Naive thymus-derived CD4-positive, alpha-beta T cell (primary cell): ENCODE measurements at regions of chr1 and their contacts with region 1.

Region 1: GRCh38 chr1:184754476-184755225 is at the start of gene EDEM3:
- DNase-seq: peak; percentile 86 to 100 (median 99)
- ATAC-seq: peak; percentile 96
- H3K4me3 ChIP-seq: peak within 1 kb of the TSS; percentile 84
- H3K4me3 Mint-ChIP-seq: peak within 1 kb of the TSS; percentile 87 to 96 (median 94)
- H3K27ac ChIP-seq: peak within 1 kb of the TSS; percentile 91
- H3K27ac Mint-ChIP-seq: peak within 1 kb of the TSS; percentile 71 to 97 (median 93)
- H3K4me1 ChIP-seq: peaks cover 9 to 13% of the 10 kb centered on the region in 2 donors
- H3K4me1 Mint-ChIP-seq: peaks cover 21 to 50% (median 46%) of the 10 kb centered on the region in 7 donors
- H3K27me3 ChIP-seq: no peaks in the 10 kb centered on the region
- H3K27me3 Mint-ChIP-seq: peaks cover 0 to 13% (median 0%) of the 10 kb centered on the region in 5 donors
- total RNA-seq, gene EDEM3: 21.0 to 55.9 (median 33.9) TPM

Region 2: GRCh38 chr1:182839209-182840065 is 1915.2 kb before region 1 on chr1 and contains the start of gene DHX9:
- CTCF ChIA-PET with region 1: no interaction called
- POLR2A ChIA-PET with region 1: no interaction called
- intact Hi-C with region 1: loop called in 1 of 2 experiments (anchors 1 kb)
- DNase-seq: peak; percentile 93 to 100 (median 97)
- ATAC-seq: peak; percentile 89
- H3K4me3 ChIP-seq: peak within 1 kb of the TSS; percentile 99
- H3K4me3 Mint-ChIP-seq: peak within 1 kb of the TSS; percentile 91 to 100 (median 98)
- H3K27ac ChIP-seq: peak within 1 kb of the TSS; percentile 84
- H3K27ac Mint-ChIP-seq: peak within 1 kb of the TSS; percentile 92 to 100 (median 98)
- H3K4me1 ChIP-seq: peaks cover 22 to 33% of the 10 kb centered on the region in 2 donors
- H3K4me1 Mint-ChIP-seq: peaks cover 36 to 61% (median 54%) of the 10 kb centered on the region in 7 donors
- H3K27me3 ChIP-seq: no peaks in the 10 kb centered on the region
- H3K27me3 Mint-ChIP-seq: peaks cover 0 to 9% (median 0%) of the 10 kb centered on the region in 5 donors
- total RNA-seq, gene DHX9: 207 to 299 (median 227) TPM

Region 3: DNA sequence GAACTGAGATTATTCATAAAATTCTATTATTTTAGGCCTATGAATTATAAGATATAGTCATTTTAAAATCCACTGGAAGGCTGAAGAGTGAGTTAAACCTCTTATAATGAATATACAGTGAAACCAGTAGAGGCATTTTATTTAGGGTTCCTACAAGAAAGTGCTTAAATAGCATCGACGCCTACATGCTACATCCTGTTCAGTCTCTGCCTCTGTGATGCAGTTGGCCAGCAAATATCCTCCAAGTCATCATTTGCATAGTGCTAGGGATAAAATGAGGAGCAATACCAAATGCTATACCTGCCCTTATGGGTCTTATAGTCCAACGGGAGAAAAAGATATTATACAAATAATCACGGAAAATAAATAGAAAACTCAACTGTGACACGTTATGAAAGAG is 59.6 kb before region 1 on chr1:
- CTCF ChIA-PET with region 1: no interaction called
- POLR2A ChIA-PET with region 1: no interaction called
- intact Hi-C with region 1: no loop called
- DNase-seq: no peak
- ATAC-seq: no peak
- H3K4me3 ChIP-seq: no peak overlapping the region
- H3K4me3 Mint-ChIP-seq: no peak overlapping the region
- H3K27ac ChIP-seq: no peak overlapping the region
- H3K27ac Mint-ChIP-seq: peak overlapping the region in 2 of 9 donors; percentile 8 to 63
- H3K4me1 ChIP-seq: no peaks in the 10 kb centered on the region
- H3K4me1 Mint-ChIP-seq: peaks cover 4 to 15% (median 8%) of the 10 kb centered on the region in 7 donors
- H3K27me3 ChIP-seq: no peaks in the 10 kb centered on the region
- H3K27me3 Mint-ChIP-seq: no peaks in the 10 kb centered on the region

Region 4: DNA sequence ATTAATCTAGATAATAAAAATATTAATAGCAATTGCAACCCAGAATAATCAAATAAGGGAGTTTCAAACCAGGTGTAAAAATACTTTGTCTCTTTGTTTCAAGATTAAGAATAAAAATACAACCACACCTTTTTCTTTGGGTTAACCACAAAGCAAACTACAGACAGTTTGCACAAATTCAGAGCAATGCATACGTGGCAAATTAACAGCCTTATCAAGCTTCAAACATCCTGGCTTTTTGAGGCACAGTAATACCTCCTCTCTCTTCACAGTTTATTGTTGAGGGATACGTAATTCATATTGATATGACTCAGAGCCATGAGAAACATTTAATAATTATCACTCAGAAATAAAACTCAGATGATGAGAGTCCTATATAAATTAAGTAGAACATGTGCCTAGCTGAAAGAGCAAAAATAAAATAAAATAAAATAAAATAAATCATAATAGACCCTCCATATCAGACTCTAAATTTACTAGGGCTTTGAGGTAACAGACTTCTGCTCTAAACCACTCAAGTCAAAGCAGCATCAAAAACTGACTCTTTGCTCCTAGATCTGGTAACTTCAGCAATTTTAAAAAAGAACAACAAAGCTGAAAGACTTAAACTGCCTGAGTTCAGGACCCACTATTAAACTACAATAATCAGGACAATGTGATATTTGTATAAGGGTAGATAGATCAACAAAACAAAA is 11.4 kb before region 1 on chr1:
- CTCF ChIA-PET with region 1: interaction called, 3 read pairs
- POLR2A ChIA-PET with region 1: interaction called, 19 read pairs
- intact Hi-C with region 1: loop called (anchors 1 kb)
- DNase-seq: peak in 7 of 9 donors; percentile 68 to 85 (median 79)
- ATAC-seq: peak; percentile 95
- H3K4me3 ChIP-seq: no peak overlapping the region
- H3K4me3 Mint-ChIP-seq: peak overlapping the region; percentile 48 to 86 (median 74)
- H3K27ac ChIP-seq: peak overlapping the region; percentile 55
- H3K27ac Mint-ChIP-seq: peak overlapping the region; percentile 82 to 99 (median 93)
- H3K4me1 ChIP-seq: peaks cover 33 to 37% of the 10 kb centered on the region in 2 donors
- H3K4me1 Mint-ChIP-seq: peaks cover 34 to 82% (median 70%) of the 10 kb centered on the region in 7 donors
- H3K27me3 ChIP-seq: no peaks in the 10 kb centered on the region
- H3K27me3 Mint-ChIP-seq: no peaks in the 10 kb centered on the region

Region 5: GRCh38 chr1:184790642-184791549 is 36.2 kb after region 1 on chr1:
- CTCF ChIA-PET with region 1: no interaction called
- POLR2A ChIA-PET with region 1: no interaction called
- intact Hi-C with region 1: no loop called
- DNase-seq: no peak
- ATAC-seq: no peak
- H3K4me3 ChIP-seq: no peak overlapping the region
- H3K4me3 Mint-ChIP-seq: no peak overlapping the region
- H3K27ac ChIP-seq: no peak overlapping the region
- H3K27ac Mint-ChIP-seq: no peak overlapping the region
- H3K4me1 ChIP-seq: no peaks in the 10 kb centered on the region
- H3K4me1 Mint-ChIP-seq: peaks cover 0 to 12% (median 7%) of the 10 kb centered on the region in 7 donors
- H3K27me3 ChIP-seq: no peaks in the 10 kb centered on the region
- H3K27me3 Mint-ChIP-seq: no peaks in the 10 kb centered on the region

Region 6: GRCh38 chr1:184910691-184911091 is 156.0 kb after region 1 on chr1:
- CTCF ChIA-PET with region 1: no interaction called
- POLR2A ChIA-PET with region 1: no interaction called
- intact Hi-C with region 1: no loop called
- DNase-seq: no peak
- ATAC-seq: no peak
- H3K4me3 ChIP-seq: no peak overlapping the region
- H3K4me3 Mint-ChIP-seq: no peak overlapping the region
- H3K27ac ChIP-seq: no peak overlapping the region
- H3K27ac Mint-ChIP-seq: no peak overlapping the region
- H3K4me1 ChIP-seq: peaks cover 0 to under 1% of the 10 kb centered on the region in 2 donors
- H3K4me1 Mint-ChIP-seq: no peaks in the 10 kb centered on the region
- H3K27me3 ChIP-seq: no peaks in the 10 kb centered on the region
- H3K27me3 Mint-ChIP-seq: peaks cover 0 to 7% (median 0%) of the 10 kb centered on the region in 5 donors

Region 7: DNA sequence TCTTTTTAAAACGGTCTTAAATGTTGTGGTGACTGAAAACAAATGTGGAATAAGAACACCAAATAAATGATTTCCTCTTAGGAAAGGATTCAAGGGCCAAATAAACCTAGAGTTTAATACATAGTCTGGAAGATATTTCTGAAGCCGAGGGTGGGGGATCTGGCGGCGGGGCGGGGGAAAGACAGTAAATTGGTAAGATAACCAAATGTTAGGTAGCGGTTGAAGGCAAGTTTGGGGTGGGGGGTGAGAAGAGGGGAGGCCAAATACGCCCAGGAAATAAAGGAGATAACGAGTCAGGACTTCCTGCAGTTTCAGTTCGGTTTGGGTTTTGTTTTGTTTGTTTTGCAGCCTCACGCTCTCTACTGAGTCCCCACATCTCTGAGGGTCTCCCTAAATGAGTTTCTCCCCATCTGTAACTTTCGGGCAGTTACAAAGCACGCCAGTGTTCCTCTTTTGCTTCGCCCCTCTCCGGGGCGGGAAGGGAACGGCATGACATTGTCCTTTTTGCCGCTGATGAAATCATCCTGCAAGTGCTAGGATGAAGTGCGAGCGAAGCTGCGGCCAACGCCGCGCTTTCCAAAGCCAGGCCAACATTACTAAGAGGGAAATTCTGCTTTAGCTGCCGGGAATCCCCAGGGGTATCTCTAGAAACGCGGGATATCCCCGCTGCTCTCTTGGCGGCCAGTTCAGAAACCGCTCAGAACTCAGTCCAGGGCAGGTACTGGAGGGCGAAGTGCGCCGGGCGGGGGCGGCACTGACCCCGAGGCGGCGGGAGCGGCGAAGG is 218.8 kb after region 1 on chr1:
- CTCF ChIA-PET with region 1: interaction called, 3 read pairs
- POLR2A ChIA-PET with region 1: no interaction called
- intact Hi-C with region 1: loop called in 1 of 2 experiments (anchors 1 kb)
- DNase-seq: peak in 1 of 9 donors; percentile 36
- ATAC-seq: peak; percentile 73
- H3K4me3 ChIP-seq: peak overlapping the region; percentile 63
- H3K4me3 Mint-ChIP-seq: peak overlapping the region; percentile 82 to 96 (median 90)
- H3K27ac ChIP-seq: peak overlapping the region; percentile 7
- H3K27ac Mint-ChIP-seq: peak overlapping the region; percentile 11 to 94 (median 58)
- H3K4me1 ChIP-seq: peaks cover 0 to 24% of the 10 kb centered on the region in 2 donors
- H3K4me1 Mint-ChIP-seq: peaks cover 9 to 56% (median 21%) of the 10 kb centered on the region in 7 donors
- H3K27me3 ChIP-seq: no peaks in the 10 kb centered on the region
- H3K27me3 Mint-ChIP-seq: peaks cover 12 to 38% (median 27%) of the 10 kb centered on the region in 5 donors

Region 8: GRCh38 chr1:185566995-185567394 is 812.3 kb after region 1 on chr1:
- CTCF ChIA-PET with region 1: no interaction called
- POLR2A ChIA-PET with region 1: no interaction called
- intact Hi-C with region 1: loop called in 1 of 2 experiments (anchors 1 kb)
- DNase-seq: peak in 7 of 9 donors; percentile 85 to 94 (median 91)
- ATAC-seq: peak; percentile 92
- H3K4me3 ChIP-seq: no peak overlapping the region
- H3K4me3 Mint-ChIP-seq: peak overlapping the region; percentile 46 to 87 (median 78)
- H3K27ac ChIP-seq: peak overlapping the region; percentile 89
- H3K27ac Mint-ChIP-seq: peak overlapping the region; percentile 96 to 100 (median 98)
- H3K4me1 ChIP-seq: peaks cover 37 to 56% of the 10 kb centered on the region in 2 donors
- H3K4me1 Mint-ChIP-seq: peaks cover 47 to 91% (median 86%) of the 10 kb centered on the region in 7 donors
- H3K27me3 ChIP-seq: no peaks in the 10 kb centered on the region
- H3K27me3 Mint-ChIP-seq: no peaks in the 10 kb centered on the region

Region 9: GRCh38 chr1:186375088-186375953 is 1620.7 kb after region 1 on chr1 and contains the starts of genes ODR4 and TPR:
- CTCF ChIA-PET with region 1: no interaction called
- POLR2A ChIA-PET with region 1: interaction called, 8 read pairs
- intact Hi-C with region 1: loop called (anchors 1 kb)
- DNase-seq: peak; percentile 92 to 98 (median 97)
- ATAC-seq: peak; percentile 88
- H3K4me3 ChIP-seq: peak within 1 kb of the TSS; percentile 98
- H3K4me3 Mint-ChIP-seq: peak within 1 kb of the TSS; percentile 90 to 99 (median 98)
- H3K27ac ChIP-seq: peak within 1 kb of the TSS; percentile 93
- H3K27ac Mint-ChIP-seq: peak within 1 kb of the TSS; percentile 91 to 99 (median 97)
- H3K4me1 ChIP-seq: peaks cover 24 to 25% of the 10 kb centered on the region in 2 donors
- H3K4me1 Mint-ChIP-seq: peaks cover 28 to 70% (median 54%) of the 10 kb centered on the region in 7 donors
- H3K27me3 ChIP-seq: no peaks in the 10 kb centered on the region
- H3K27me3 Mint-ChIP-seq: no peaks in the 10 kb centered on the region
- total RNA-seq, gene ODR4: 13.6 to 19.6 (median 18.3) TPM
- total RNA-seq, gene TPR: 118 to 195 (median 158) TPM